CD4-positive, alpha-beta memory T cell (primary cell): ENCODE measurements at regions of chr3 and their contacts with region 1.

Region 1: GRCh38 chr3:14178247-14179113 is at the starts of genes LSM3 and XPC:
- DNase-seq: peak; percentile 97 to 100 (median 99)
- H3K4me3 ChIP-seq: peak within 1 kb of the TSS; percentile 78 to 81
- H3K4me3 Mint-ChIP-seq: peak within 1 kb of the TSS; percentile 92 to 99 (median 97)
- H3K27ac ChIP-seq: peak within 1 kb of the TSS; percentile 97
- H3K27ac Mint-ChIP-seq: peak within 1 kb of the TSS; percentile 93 to 100 (median 99)
- H3K4me1 ChIP-seq: peaks cover 57% of the 10 kb centered on the region
- H3K4me1 Mint-ChIP-seq: peaks cover 55 to 81% (median 63%) of the 10 kb centered on the region in 4 donors
- H3K27me3 ChIP-seq: no peaks in the 10 kb centered on the region
- H3K27me3 Mint-ChIP-seq: no peaks in the 10 kb centered on the region
- total RNA-seq, gene LSM3: 7.2 to 8.2 TPM
- total RNA-seq, gene XPC: 104 to 108 TPM

Region 2: GRCh38 chr3:12841149-12841970 is 1337.1 kb before region 1 on chr3 and contains the start of gene RPL32:
- CTCF ChIA-PET with region 1: no interaction called
- POLR2A ChIA-PET with region 1: interaction called, 6 read pairs
- intact Hi-C with region 1: loop called (anchors 2 kb)
- DNase-seq: peak; percentile 90 to 92 (median 91)
- H3K4me3 ChIP-seq: peak within 1 kb of the TSS; percentile 85 to 89
- H3K4me3 Mint-ChIP-seq: peak within 1 kb of the TSS; percentile 95 to 99 (median 98)
- H3K27ac ChIP-seq: peak within 1 kb of the TSS; percentile 92
- H3K27ac Mint-ChIP-seq: peak within 1 kb of the TSS; percentile 99 to 100 (median 100)
- H3K4me1 ChIP-seq: peaks cover 40% of the 10 kb centered on the region
- H3K4me1 Mint-ChIP-seq: peaks cover 28 to 56% (median 40%) of the 10 kb centered on the region in 4 donors
- H3K27me3 ChIP-seq: no peaks in the 10 kb centered on the region
- H3K27me3 Mint-ChIP-seq: no peaks in the 10 kb centered on the region
- total RNA-seq, gene RPL32: 3,446 to 3,480 TPM

Region 3: GRCh38 chr3:13884851-13885703 is 293.4 kb before region 1 on chr3:
- CTCF ChIA-PET with region 1: interaction called, 5 read pairs
- POLR2A ChIA-PET with region 1: interaction called, 24 read pairs
- intact Hi-C with region 1: no loop called
- DNase-seq: peak; percentile 77 to 80 (median 78)
- H3K4me3 ChIP-seq: no peak overlapping the region
- H3K4me3 Mint-ChIP-seq: peak overlapping the region in 2 of 8 donors; percentile 60 to 74
- H3K27ac ChIP-seq: no peak overlapping the region
- H3K27ac Mint-ChIP-seq: peak overlapping the region in 5 of 7 donors; percentile 1 to 76 (median 63)
- H3K4me1 ChIP-seq: peaks cover 20% of the 10 kb centered on the region
- H3K4me1 Mint-ChIP-seq: peaks cover 4 to 31% (median 16%) of the 10 kb centered on the region in 4 donors
- H3K27me3 ChIP-seq: no peaks in the 10 kb centered on the region
- H3K27me3 Mint-ChIP-seq: peaks cover 16 to 17% of the 10 kb centered on the region in 2 donors

Region 4: GRCh38 chr3:14144423-14145075 is 33.9 kb before region 1 on chr3:
- CTCF ChIA-PET with region 1: interaction called, 21 read pairs
- POLR2A ChIA-PET with region 1: interaction called, 220 read pairs
- intact Hi-C with region 1: loop called (anchors 1 kb)
- DNase-seq: peak; percentile 87 to 96 (median 93)
- H3K4me3 ChIP-seq: peak overlapping the region in 1 of 2 donors; percentile 29
- H3K4me3 Mint-ChIP-seq: peak overlapping the region; percentile 73 to 89 (median 82)
- H3K27ac ChIP-seq: peak overlapping the region; percentile 95
- H3K27ac Mint-ChIP-seq: peak overlapping the region; percentile 95 to 100 (median 100)
- H3K4me1 ChIP-seq: peaks cover 67% of the 10 kb centered on the region
- H3K4me1 Mint-ChIP-seq: peaks cover 45 to 72% (median 60%) of the 10 kb centered on the region in 4 donors
- H3K27me3 ChIP-seq: no peaks in the 10 kb centered on the region
- H3K27me3 Mint-ChIP-seq: no peaks in the 10 kb centered on the region

Region 5: GRCh38 chr3:14203521-14204079 is 25.1 kb after region 1 on chr3:
- CTCF ChIA-PET with region 1: interaction called, 14 read pairs
- POLR2A ChIA-PET with region 1: interaction called, 4 read pairs
- intact Hi-C with region 1: no loop called
- DNase-seq: peak in 4 of 5 donors; percentile 31 to 43 (median 35)
- H3K4me3 ChIP-seq: no peak overlapping the region
- H3K4me3 Mint-ChIP-seq: no peak overlapping the region
- H3K27ac ChIP-seq: no peak overlapping the region
- H3K27ac Mint-ChIP-seq: peak overlapping the region in 1 of 7 donors; percentile 56
- H3K4me1 ChIP-seq: no peaks in the 10 kb centered on the region
- H3K4me1 Mint-ChIP-seq: peaks cover 3 to 6% (median 5%) of the 10 kb centered on the region in 4 donors
- H3K27me3 ChIP-seq: no peaks in the 10 kb centered on the region
- H3K27me3 Mint-ChIP-seq: no peaks in the 10 kb centered on the region

Region 6: GRCh38 chr3:14651440-14652251 is 473.2 kb after region 1 on chr3 and contains the start of gene CCDC174:
- CTCF ChIA-PET with region 1: no interaction called
- POLR2A ChIA-PET with region 1: interaction called, 41 read pairs
- intact Hi-C with region 1: loop called (anchors 1 kb)
- DNase-seq: peak; percentile 95 to 98 (median 97)
- H3K4me3 ChIP-seq: peak within 1 kb of the TSS; percentile 67 to 98
- H3K4me3 Mint-ChIP-seq: peak within 1 kb of the TSS; percentile 84 to 99 (median 94)
- H3K27ac ChIP-seq: peak within 1 kb of the TSS; percentile 98
- H3K27ac Mint-ChIP-seq: peak within 1 kb of the TSS; percentile 91 to 100 (median 98)
- H3K4me1 ChIP-seq: peaks cover 37% of the 10 kb centered on the region
- H3K4me1 Mint-ChIP-seq: peaks cover 27 to 50% (median 40%) of the 10 kb centered on the region in 4 donors
- H3K27me3 ChIP-seq: no peaks in the 10 kb centered on the region
- H3K27me3 Mint-ChIP-seq: no peaks in the 10 kb centered on the region
- total RNA-seq, gene CCDC174: 45.9 to 51.8 TPM